ENCODE measurements at regions of chr18 and their contacts with region 1.

Region 1: DNA sequence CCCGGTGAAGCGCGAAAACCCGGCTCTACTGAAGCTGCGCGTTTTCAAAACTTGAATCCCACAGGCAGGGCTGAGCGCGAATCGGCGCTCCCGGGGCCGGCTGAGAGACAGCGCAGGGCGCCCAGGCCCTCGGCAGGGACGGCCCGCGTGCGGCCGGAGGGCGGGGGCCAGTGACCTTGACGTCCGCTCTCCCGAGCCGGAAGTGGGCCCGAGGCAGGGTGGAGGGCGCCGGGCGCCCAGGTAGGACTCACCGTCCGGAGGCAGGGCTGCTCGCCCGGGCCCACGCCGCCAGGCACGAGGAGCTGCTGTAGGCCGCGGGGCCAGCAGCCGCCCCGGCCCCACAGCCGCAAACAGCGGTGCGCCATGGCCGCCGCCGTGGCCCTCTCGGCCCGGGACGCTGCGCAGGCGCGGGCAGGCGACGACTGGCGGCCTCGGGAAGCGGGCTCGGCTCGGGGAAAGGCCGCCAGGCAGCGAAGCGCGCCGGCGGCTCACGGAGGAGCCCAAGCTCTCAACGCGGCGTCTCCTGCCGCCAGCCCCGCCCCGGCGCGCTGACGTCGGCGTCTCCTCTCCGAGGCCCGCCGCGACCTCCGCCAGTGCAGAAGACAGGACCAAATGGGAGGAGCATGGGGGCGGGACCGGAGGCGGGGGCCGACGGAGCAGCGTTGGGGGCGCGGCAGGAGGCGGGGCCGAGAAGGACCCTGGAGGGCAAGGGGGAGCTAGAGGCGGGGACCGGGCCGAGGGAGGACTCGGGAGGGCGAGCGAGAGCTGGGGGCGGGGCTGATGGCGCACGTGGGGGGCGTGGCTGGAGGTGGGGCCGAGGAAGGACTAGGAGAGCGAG is at the start of gene AFG3L2:
- DNase-seq: peak; percentile 100
- total RNA-seq, gene AFG3L2: 110 TPM

Region 2: DNA sequence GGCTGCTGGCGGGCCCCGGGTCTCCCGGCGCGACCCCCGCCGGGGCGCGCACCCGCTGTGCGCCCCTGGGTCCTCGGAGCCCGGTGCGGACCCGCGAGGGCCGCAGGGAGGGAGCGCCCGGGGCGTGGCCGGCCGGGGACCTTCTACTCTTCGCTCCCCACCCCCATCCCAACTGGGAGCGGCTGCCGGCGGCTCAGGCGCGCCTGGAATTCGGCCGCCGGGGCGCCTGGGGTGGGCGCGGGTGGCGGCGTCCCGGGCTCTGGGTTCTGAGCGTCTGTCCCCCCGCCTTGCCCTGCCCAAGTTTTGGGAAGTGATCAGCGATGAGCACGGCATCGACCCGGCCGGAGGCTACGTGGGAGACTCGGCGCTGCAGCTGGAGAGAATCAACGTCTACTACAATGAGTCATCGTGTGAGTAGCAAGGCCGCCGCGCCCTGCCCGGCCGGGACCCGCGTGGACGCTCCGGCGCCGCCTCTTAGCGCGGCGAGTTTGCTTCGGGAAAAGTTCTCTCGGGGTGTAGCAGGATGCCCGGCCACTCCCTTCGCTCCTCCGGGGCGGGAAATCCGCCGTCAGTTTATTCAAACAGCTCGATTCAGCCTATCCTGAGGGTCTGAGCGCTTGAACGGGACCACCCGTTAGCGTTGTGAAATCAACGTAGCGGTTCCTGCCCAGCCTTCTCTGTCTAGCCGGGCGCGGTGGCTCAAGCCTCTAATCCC is 68.4 kb before region 1 on chr18:
- intact Hi-C with region 1: loop called (anchors 1 kb)
- DNase-seq: peak; percentile 91

Region 3: DNA sequence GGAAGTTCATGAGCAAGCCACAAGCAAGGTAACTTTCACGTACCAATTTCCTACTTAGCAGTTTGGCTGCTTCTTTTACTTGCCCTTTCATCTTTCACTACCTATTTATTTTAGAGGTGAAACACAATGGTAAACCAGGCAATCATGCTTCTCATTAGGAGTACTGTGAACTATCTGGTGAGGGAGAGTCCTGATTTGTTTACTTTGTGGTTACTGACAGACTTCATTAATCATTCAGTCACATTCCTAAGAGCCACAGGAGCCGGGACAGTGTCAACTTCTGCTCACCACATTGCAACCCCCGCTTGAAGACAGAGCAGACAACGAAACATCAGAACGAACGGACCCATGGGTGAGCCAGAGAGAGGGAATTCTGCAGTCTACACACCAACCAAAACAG is 40.1 kb before region 1 on chr18:
- intact Hi-C with region 1: loop called (anchors 5 kb)
- DNase-seq: no peak

Region 4: DNA sequence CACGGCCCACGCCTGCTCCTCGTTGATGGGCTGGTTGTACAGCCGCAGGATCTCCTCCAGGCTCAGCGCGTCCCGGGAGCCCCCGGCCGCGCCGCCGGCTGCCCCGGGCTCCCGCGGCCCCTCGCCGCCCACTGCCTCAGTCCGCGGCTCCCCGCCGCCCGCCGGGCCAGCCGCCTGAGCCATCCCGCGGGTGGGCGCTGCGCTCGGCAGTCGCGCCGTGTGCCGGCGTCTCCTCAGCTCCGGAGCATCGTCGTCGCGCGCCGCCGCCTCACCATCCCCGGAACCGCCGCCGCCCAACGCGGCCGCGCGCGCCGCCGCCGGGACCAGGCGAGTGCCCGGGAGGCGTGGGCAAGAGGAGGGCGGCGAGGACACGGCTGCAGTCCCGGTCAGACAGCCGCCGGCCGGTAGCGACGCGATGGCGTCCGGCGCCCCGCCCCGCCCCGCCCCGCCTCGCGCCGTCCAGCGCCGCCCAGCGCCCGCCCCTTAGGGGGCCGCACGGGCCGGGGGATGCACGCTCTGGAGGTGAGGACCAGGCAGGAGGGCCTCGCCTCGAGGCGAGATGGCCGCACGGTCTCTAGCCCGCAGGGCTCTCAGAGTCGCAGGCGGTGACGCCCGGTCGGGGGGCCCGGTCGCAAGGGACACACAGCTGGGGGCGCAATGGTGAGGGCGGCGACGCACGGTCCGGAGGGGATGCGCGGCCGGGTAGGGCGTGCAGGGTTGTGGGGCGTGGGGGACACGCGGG is 280.9 kb after region 1 on chr18 and contains the start of gene SPIRE1:
- intact Hi-C with region 1: loop called (anchors 5 kb)
- DNase-seq: peak; percentile 89
- total RNA-seq, gene SPIRE1: 87.1 TPM

Region 5: DNA sequence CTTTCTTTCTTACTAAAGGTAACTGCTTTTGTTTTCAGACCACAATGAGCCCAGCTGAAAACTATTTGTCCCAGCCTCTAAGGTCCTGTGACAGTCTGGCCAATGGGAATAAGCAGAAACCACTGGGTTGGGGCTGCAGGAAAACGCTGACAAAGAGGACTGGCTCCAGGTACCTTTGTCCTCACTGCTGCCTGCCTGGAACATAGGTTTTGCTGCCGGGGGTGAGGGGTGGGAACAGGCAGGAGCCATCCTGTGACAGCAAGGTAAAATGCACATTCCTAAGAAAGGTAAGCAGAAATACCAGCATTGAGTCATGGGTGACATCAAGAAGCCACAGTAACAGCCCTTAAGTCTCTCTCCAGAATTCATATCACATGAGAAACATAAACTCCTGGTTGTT is 485.5 kb after region 1 on chr18:
- intact Hi-C with region 1: no loop called
- DNase-seq: no peak